Gastrocnemius medialis (tissue), 4 donors: ENCODE measurements at regions of chr14 and their contacts with region 1.

Region 1: DNA sequence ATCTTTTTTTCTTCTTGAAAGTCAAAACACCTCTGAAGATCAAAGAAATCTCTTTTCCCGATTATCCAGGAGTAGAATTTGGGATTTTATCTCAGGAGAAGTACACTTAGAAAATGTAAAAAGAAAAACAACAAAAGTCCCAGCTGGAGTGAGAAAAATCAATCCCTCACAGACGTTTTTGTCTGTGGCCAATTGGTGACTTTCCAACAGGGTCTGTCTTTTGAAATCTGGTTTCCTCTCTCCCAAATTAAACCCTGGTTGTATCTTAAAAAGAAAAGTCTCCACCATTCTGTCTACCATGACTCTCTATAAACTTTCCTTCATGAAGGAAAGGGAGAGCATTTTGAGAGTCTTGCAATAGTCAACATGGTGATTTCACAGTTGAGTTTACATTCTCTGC is 88.1 kb downstream of the DACT1 start:
- DNase-seq: no peak
- ATAC-seq: no peak
- H3K4me3 ChIP-seq: no peak overlapping the region
- H3K27ac ChIP-seq: no peak overlapping the region
- H3K4me1 ChIP-seq: peaks cover 5% of the 10 kb centered on the region in 2 donors
- H3K27me3 ChIP-seq: no peaks in the 10 kb centered on the region
- CTCF ChIP-seq: no peak
- POLR2A ChIP-seq: no peak

Region 2: GRCh38 chr14:58697930-58698642 is 27.8 kb before region 1 on chr14:
- in situ Hi-C with region 1: no loop called
- intact Hi-C with region 1: no loop called
- DNase-seq: no peak
- ATAC-seq: no peak
- H3K4me3 ChIP-seq: no peak overlapping the region
- H3K27ac ChIP-seq: no peak overlapping the region
- H3K4me1 ChIP-seq: peaks cover 20 to 23% of the 10 kb centered on the region in 2 donors
- H3K27me3 ChIP-seq: no peaks in the 10 kb centered on the region
- CTCF ChIP-seq: no peak
- POLR2A ChIP-seq: no peak

Region 3: DNA sequence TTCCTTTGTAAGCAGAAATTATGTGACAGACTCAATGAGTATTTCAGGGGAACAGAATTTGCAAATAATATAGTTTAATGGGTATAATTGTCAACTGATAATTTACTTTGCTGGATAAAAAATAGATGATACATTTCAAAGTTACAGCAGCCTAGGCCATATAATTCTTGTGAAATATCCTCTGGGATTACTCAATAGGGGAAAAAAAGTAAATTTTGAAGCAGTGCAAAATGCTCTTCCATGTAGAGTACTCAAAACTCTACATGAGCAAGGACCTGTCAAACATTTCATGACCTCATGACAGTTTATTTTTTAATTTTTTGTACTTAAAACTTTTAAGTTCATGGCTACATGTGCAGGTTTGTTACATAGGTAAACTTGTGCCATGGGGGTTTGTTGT is 75.2 kb after region 1 on chr14:
- in situ Hi-C with region 1: no loop called
- intact Hi-C with region 1: loop called (anchors 2 kb)
- DNase-seq: no peak
- ATAC-seq: no peak
- H3K4me3 ChIP-seq: no peak overlapping the region
- H3K27ac ChIP-seq: no peak overlapping the region
- H3K4me1 ChIP-seq: peaks cover 0 to 3% of the 10 kb centered on the region in 2 donors
- H3K27me3 ChIP-seq: no peaks in the 10 kb centered on the region
- CTCF ChIP-seq: no peak
- POLR2A ChIP-seq: no peak